Activated CD8-positive, alpha-beta T cell treated with anti-CD3 and anti-CD28 coated beads for 36 hours (primary cell): ENCODE measurements at regions of chr15 and their contacts with region 1.

Region 1: DNA sequence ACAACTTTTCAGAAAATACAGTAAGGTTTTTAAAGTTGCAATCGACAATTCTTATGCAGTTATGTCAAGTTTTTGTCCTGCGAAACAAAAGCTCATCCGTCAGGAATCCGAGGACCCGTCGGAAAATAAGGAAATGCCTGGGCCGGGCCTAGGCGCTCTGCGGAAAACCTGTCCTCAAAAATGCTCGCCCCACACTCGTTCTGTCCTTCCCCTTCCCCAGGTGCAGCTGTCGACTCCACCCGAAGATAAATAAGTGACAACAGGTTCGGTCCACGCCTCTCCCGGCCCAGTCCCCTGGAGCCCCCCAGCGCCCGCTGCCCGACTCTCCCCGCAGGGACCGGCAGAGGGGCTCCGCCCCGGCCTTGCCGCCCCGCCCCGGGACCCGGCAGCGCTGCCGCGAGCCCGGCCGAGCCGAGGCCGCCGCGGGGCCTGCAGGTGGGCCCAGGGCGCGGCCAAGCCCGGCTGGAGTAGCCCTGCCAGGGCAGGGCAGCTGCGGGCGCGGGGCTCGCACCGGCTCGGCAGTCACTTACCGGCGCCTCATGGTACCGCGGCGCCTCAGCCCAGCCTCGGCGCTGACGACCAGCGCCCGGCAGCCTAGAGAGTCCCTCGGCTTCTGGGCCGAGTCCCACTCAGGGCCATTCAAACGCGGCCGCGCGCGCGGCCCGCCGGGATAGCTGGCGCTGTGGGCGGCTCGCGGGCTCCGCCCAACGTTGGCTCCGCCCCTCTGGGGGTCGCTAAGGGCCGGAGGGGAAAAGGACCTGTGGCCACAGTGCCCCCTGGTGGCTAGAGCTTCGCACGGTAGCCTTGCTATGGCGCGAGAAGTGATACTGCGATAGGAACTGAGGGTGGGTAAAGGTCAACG is at the start of gene KATNBL1:
- DNase-seq: peak; percentile 98
- ATAC-seq: peak; percentile 97
- H3K4me3 Mint-ChIP-seq: peak within 1 kb of the TSS; percentile 88
- H3K27ac Mint-ChIP-seq: peak within 1 kb of the TSS; percentile 87
- H3K4me1 Mint-ChIP-seq: peaks cover 24% of the 10 kb centered on the region
- H3K27me3 Mint-ChIP-seq: no peaks in the 10 kb centered on the region
- CTCF ChIP-seq: peak; percentile 77
- total RNA-seq, gene KATNBL1: 41.6 to 45.5 TPM

Region 2: DNA sequence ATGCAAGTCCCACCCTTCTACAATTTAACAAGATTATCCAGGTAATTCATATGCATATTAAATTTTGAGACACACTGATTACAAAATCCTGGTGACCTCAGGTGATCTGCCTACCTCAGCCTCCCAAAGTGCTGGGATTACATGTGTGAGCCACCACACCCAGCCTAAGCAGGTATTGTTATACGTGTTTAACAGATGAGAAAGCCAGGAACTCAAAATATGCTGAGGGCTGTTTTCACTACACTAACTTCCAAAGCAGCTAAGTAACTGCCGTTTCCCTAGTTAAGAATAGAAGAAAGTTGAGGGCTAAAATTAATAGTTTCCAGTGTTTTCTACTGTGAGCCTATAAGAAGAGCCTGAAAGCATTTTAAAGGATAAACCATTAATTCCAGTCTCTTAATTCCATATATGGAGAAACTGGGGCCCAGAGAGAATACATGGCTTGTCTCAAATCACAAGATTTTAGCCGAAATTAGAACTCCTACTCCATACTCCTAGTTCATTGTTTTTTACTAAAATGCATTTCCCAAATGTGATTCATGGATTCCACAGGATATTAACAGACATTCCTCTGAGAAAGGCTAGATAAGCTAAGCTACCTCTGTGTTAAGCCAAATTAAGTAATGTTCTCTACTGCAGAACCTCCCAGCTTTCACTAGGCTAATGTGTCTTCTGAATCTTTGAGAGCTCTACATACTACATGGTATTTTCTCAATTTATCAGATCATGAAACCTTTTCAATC is 153.6 kb before region 1 on chr15:
- CTCF ChIA-PET with region 1: interaction called, 60 read pairs
- POLR2A ChIA-PET with region 1: interaction called, 3 read pairs
- intact Hi-C with region 1: no loop called
- DNase-seq: no peak
- ATAC-seq: no peak
- H3K4me3 Mint-ChIP-seq: no peak overlapping the region
- H3K27ac Mint-ChIP-seq: no peak overlapping the region
- H3K4me1 Mint-ChIP-seq: no peaks in the 10 kb centered on the region
- H3K27me3 Mint-ChIP-seq: no peaks in the 10 kb centered on the region
- CTCF ChIP-seq: no peak

Region 3: DNA sequence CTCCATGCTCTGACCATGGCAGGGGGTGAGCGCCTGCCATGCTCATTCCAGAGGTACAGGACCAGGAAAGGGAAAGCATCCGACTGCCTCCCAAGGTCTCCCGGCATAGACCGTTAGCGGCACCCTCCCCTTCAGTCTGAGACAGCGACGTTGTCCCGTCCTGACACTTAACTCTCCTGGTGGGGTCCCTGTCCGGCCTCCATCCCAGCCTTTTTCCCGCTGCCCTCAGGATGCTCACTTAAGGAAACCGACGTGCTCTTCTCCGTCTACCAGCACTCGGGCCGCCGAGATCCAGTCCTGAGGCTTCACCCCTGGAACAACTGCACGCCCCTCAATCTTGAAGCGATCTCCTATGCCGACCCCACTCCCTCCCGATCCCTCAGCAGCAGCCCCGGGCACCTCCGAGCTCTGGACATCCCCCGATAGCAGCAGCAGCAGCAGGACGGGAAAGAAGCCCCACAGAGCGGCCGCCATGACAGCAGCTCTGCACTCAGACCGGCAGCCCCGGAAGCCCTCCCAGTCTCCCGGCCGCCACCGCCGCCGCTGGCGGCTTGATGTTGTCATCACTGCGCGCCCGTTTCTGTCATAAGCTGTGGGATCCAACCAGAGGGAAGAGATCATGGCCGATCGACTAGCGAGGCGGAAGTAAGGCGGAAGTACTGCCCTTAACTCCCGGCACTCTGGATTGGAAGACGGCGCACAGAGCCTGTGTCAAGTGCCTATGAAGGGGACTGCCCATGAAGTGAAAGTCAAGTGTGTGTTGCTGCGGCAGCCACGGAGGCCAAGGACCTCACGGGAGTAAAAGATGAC is 108.1 kb before region 1 on chr15 and contains the starts of genes EMC7 and PGBD4:
- CTCF ChIA-PET with region 1: interaction called, 69 read pairs
- POLR2A ChIA-PET with region 1: interaction called, 4 read pairs
- intact Hi-C with region 1: no loop called
- DNase-seq: peak; percentile 99
- ATAC-seq: peak; percentile 99
- H3K4me3 Mint-ChIP-seq: peak within 1 kb of the TSS; percentile 100
- H3K27ac Mint-ChIP-seq: peak within 1 kb of the TSS; percentile 99
- H3K4me1 Mint-ChIP-seq: peaks cover 25% of the 10 kb centered on the region
- H3K27me3 Mint-ChIP-seq: no peaks in the 10 kb centered on the region
- CTCF ChIP-seq: no peak
- total RNA-seq, gene EMC7: 45.0 to 49.9 TPM
- total RNA-seq, gene PGBD4: 2.6 to 2.7 TPM

Region 4: DNA sequence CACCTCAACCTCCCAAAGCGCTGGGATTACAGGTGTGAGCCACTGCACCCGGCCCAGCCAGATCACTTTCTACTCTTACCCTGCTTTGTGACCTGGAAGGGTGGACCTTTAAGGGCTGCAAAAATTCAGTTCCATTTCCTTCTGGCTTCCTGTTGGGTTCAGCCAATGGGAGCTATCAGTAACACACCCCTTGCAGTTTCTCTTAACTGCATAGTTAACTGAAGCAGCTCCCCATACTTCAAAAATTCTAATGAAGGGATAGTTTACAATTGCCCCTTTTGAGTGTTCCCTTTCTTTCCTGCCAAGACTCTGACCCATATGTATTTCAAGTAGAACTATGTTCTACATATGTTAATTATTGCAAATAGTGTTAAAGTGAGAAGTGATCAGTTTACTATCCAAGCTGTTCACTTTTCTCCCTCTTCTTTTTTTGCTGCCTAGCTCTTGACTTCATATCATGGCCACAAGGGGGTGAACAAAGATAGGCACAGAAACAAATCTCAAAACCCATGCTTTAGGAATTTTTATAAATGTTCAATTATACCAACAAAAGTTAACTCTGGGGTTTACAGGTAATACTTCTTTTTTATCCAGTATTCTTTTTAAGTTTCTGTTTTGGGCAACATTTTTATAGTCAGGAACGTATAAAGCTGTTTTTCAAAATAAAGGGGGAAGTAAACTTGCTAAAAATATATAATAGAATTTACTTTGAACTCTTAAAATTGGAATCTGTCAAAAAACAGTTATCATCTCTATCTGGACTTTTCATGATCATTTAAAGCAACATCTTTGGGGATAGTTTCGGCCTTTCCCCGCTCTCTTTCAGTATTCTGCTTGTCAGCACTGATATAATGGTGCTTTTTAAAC is 99.6 kb before region 1 on chr15:
- CTCF ChIA-PET with region 1: interaction called, 69 read pairs
- POLR2A ChIA-PET with region 1: no interaction called
- intact Hi-C with region 1: loop called (anchors 1 kb)
- DNase-seq: peak; percentile 15
- ATAC-seq: no peak
- H3K4me3 Mint-ChIP-seq: no peak overlapping the region
- H3K27ac Mint-ChIP-seq: no peak overlapping the region
- H3K4me1 Mint-ChIP-seq: no peaks in the 10 kb centered on the region
- H3K27me3 Mint-ChIP-seq: no peaks in the 10 kb centered on the region
- CTCF ChIP-seq: peak; percentile 71

Region 5: GRCh38 chr15:34160735-34161134 is 48.9 kb before region 1 on chr15:
- CTCF ChIA-PET with region 1: interaction called, 13 read pairs
- POLR2A ChIA-PET with region 1: no interaction called
- intact Hi-C with region 1: no loop called
- DNase-seq: no peak
- ATAC-seq: no peak
- H3K4me3 Mint-ChIP-seq: no peak overlapping the region
- H3K27ac Mint-ChIP-seq: no peak overlapping the region
- H3K4me1 Mint-ChIP-seq: peaks cover 5% of the 10 kb centered on the region
- H3K27me3 Mint-ChIP-seq: no peaks in the 10 kb centered on the region
- CTCF ChIP-seq: no peak

Region 6: GRCh38 chr15:34223904-34224596 is 14.4 kb after region 1 on chr15:
- CTCF ChIA-PET with region 1: interaction called, 22 read pairs
- POLR2A ChIA-PET with region 1: interaction called, 11 read pairs
- intact Hi-C with region 1: no loop called
- DNase-seq: no peak
- ATAC-seq: peak; percentile 2
- H3K4me3 Mint-ChIP-seq: peak overlapping the region; percentile 95
- H3K27ac Mint-ChIP-seq: peak overlapping the region; percentile 90
- H3K4me1 Mint-ChIP-seq: peaks cover 18% of the 10 kb centered on the region
- H3K27me3 Mint-ChIP-seq: peaks cover 1% of the 10 kb centered on the region
- CTCF ChIP-seq: no peak

Region 7: GRCh38 chr15:34275154-34275553 is 65.5 kb after region 1 on chr15:
- CTCF ChIA-PET with region 1: no interaction called
- POLR2A ChIA-PET with region 1: no interaction called
- intact Hi-C with region 1: no loop called
- DNase-seq: no peak
- ATAC-seq: no peak
- H3K4me3 Mint-ChIP-seq: no peak overlapping the region
- H3K27ac Mint-ChIP-seq: no peak overlapping the region
- H3K4me1 Mint-ChIP-seq: peaks cover 19% of the 10 kb centered on the region
- H3K27me3 Mint-ChIP-seq: no peaks in the 10 kb centered on the region
- CTCF ChIP-seq: no peak